ENCODE measurements at regions of chr1 and their contacts with region 1.

Region 1: GRCh38 chr1:28602536-28603439 is 10.7 kb downstream of the RAB42 start:
- DNase-seq: no peak
- ATAC-seq: no peak
- H3K4me3 Mint-ChIP-seq: no peak overlapping the region
- H3K27ac Mint-ChIP-seq: peak overlapping the region; percentile 14
- H3K4me1 Mint-ChIP-seq: peaks cover 13% of the 10 kb centered on the region
- H3K27me3 Mint-ChIP-seq: no peaks in the 10 kb centered on the region

Region 2: GRCh38 chr1:28359592-28360239 is 243.1 kb before region 1 on chr1:
- CTCF ChIA-PET with region 1: interaction called, 16 read pairs
- POLR2A ChIA-PET with region 1: no interaction called
- DNase-seq: peak; percentile 87
- ATAC-seq: peak; percentile 68
- H3K4me3 Mint-ChIP-seq: no peak overlapping the region
- H3K27ac Mint-ChIP-seq: no peak overlapping the region
- H3K4me1 Mint-ChIP-seq: peaks cover 10% of the 10 kb centered on the region
- H3K27me3 Mint-ChIP-seq: peaks cover 3% of the 10 kb centered on the region

Region 3: DNA sequence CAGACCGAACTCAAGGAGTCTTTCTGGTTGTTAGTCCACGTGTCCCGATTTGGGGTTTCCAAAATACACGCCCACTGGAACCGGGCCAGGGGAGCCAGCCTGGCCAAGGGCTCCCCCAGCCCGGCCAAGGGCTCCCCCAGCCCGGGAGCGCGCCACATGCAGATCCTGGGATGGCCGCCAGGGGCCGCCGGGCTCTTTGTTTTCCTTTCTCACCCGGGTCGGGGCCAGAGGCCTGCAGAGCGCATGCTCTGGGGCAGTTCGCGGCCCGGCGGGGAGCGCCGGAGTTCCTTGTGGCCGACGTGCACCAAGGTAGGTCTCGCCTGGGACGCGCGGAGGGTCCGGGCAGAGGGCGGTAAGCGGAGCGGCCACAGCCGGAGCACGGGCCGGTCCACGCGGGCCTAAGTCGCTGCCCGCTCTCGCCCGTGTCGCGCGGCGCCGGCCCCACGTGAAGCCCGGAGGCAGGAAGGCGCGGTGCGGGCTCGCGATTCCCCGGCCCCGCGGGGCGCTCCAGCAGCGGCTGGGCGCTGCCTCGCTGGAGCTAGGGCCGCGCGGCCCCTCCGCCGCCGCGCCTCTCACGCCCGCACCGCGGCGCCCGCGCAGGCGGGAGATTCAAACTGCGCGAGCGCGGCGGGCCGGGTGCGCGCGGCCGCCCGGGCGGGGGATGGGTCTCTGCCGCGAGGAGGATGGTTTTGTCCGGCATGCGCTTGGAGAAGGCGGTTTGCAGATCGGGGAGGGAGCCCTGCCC is 84.6 kb before region 1 on chr1:
- CTCF ChIA-PET with region 1: interaction called, 13 read pairs
- POLR2A ChIA-PET with region 1: no interaction called
- DNase-seq: peak; percentile 91
- ATAC-seq: peak; percentile 77
- H3K4me3 Mint-ChIP-seq: peak overlapping the region; percentile 92
- H3K27ac Mint-ChIP-seq: peak overlapping the region; percentile 94
- H3K4me1 Mint-ChIP-seq: peaks cover 41% of the 10 kb centered on the region
- H3K27me3 Mint-ChIP-seq: no peaks in the 10 kb centered on the region